ENCODE measurements at regions of chr21 and their contacts with region 1.

Region 1: DNA sequence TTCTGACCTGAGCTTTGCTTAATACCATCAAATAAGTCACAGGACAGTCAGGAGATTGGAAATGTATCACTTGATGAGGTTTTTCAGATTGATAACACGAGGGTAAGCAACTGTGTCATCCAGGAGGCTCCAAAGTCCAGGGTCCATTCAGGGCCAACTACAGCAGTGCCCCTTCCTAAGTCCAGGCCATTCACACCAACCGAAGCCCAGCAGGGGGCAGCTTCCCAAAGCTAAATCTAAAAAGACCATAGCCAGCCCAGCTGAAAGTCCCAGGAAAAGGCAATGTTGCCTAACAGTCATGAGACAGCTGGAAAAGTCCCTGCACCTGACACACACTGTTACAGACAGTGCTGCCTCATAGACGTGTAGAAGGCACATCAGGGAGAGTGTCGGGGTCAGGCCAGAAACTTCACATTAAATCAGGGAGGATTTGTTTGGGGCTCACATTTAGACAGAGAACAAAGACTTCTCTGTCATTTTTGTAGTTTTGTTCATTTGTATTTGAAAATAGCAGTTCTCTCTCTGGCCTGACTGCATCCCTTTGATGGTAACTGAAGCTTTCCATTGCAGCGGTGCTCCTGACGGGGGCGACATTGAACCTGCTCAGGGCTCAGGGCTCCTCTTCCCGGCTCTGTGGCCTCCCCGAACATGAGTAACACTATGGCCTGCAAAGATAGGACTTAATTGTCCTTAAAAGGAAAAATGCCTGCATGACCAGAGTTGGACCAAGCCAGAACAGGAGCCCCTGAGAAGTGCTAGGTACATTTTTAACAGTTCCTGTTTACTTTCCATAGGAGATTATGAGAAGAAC is 200.4 kb downstream of the NRIP1 start:
- DNase-seq: peak; percentile 94
- ATAC-seq: peak; percentile 95
- H3K4me3 ChIP-seq: peak overlapping the region in 2 of 3 experiments; percentile 48 to 53; a peak in 4 of 6 replicates
- H3K27ac ChIP-seq: peak overlapping the region; percentile 76
- H3K4me1 ChIP-seq: peaks cover 54% of the 10 kb centered on the region
- H3K27me3 ChIP-seq: no peaks in the 10 kb centered on the region
- CTCF ChIP-seq: peak; percentile 76
- EP300 ChIP-seq: peak in 1 of 2 experiments; percentile 69; a peak in 2 of 4 replicates
- POLR2A ChIP-seq: no peak
- RAD21 ChIP-seq: peak; percentile 72; the same call in 1 of the 2 replicates

Region 2: DNA sequence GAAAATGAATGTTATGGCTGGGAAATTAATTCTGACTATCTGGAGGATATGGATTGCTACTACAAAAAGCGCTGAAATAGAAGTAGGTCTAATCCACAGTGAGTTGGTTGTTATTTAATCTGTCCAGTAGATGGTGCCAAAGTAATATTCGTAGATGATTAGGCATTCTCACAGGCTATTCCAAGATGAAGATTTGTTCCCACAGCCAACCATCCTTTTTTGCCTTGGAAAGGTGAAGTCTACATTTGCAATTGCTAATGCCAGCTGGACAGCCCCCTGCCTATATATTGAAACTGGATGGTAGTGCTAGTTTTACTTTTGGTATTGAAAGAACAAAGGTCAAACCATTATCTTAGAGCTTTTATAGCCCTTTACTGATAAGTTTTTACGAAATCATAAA is 604.7 kb before region 1 on chr21:
- CTCF ChIA-PET with region 1: interaction called, 4 read pairs
- POLR2A ChIA-PET with region 1: no interaction called
- in situ Hi-C with region 1: no loop called
- intact Hi-C with region 1: loop called (anchors 2 kb)
- DNase-seq: peak; percentile 39
- ATAC-seq: peak; percentile 82
- H3K4me3 ChIP-seq: no peak overlapping the region
- H3K27ac ChIP-seq: no peak overlapping the region
- H3K4me1 ChIP-seq: no peaks in the 10 kb centered on the region
- H3K27me3 ChIP-seq: no peaks in the 10 kb centered on the region
- CTCF ChIP-seq: peak; percentile 67
- EP300 ChIP-seq: no peak
- POLR2A ChIP-seq: no peak
- RAD21 ChIP-seq: no peak

Region 3: DNA sequence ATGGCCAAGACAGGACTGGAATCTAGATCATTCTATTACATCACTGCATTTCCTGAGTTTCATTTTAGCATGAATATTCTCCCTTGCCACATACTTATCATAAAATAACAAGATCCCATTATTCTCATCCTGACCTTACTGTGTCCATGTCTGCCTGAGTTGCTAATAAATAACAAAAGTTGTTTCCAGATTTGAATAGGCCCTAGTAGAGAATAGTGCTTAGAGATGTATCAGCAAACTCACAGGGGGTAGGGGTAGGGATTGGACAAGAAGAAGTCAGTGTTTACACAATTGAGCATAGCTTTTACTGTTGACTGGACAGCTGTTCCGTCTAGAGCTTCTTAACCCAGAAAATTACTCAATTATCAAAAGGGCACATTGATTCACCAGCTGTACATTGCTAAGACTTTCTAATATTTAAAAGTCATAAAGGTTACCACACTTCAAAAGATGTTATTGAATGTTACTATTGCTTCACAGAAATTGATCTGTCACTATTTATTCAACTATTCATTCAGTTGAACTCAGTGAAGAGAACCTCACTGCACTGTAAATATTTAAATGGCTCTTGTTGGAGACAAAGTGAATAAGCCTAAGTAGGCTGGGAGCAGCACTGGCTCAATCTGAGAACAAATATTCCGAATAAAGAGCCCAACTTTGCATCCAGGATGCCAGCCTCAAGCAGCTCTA is 78.5 kb after region 1 on chr21:
- CTCF ChIA-PET with region 1: interaction called, 7 read pairs
- POLR2A ChIA-PET with region 1: interaction called, 14 read pairs
- in situ Hi-C with region 1: no loop called
- intact Hi-C with region 1: loop called (anchors 1 kb)
- DNase-seq: peak; percentile 91
- ATAC-seq: peak; percentile 96
- H3K4me3 ChIP-seq: no peak overlapping the region; a peak in 1 of 6 replicates
- H3K27ac ChIP-seq: peak overlapping the region; percentile 71
- H3K4me1 ChIP-seq: peaks cover 55% of the 10 kb centered on the region
- H3K27me3 ChIP-seq: no peaks in the 10 kb centered on the region
- CTCF ChIP-seq: no peak
- EP300 ChIP-seq: peak; percentile 62 to 97
- POLR2A ChIP-seq: no peak
- RAD21 ChIP-seq: no peak

Region 4: DNA sequence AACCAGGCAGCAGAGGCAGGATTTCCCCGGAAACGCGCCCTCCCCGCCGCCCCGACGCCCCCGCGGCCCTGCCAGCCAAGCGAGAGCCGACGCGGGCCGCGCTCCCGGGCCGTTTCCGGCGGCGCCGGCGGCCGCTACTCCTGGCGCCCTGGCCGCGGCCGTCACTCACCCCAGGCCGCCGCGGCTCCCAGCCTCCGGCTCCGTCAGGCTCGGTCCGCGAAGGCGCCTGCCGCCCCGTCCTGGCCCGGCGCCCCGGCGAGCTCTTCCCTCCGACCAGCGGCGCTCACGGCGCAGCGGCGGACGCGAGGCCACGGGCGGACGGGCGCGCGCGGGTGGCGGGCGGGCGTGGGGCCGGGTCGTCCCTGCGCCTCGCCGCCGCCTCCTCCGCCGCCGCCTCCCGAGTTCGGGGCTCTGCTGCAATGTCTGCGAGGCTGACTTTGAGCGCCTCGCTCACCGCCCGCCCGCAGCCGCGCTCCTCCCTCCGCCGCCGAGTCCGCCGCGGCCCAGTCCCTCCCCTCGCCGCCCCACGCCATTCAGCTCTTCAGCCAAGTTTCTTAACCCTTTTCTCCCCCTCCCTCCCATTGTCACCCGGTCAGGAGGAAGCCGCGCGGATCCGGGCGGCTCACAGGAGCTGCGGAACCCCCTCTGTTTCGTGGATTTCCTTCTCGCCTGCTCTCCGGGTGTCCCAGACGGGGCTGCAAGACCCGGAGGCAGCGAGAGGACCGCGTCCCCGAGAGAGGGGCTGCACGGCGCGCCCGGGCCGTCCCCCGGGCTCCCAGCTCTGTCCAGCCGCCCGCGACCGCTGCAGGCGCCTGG is 200.4 kb after region 1 on chr21 and contains the start of gene NRIP1:
- CTCF ChIA-PET with region 1: no interaction called
- POLR2A ChIA-PET with region 1: interaction called, 17 read pairs
- in situ Hi-C with region 1: loop called (anchors 10 kb)
- intact Hi-C with region 1: loop called (anchors 1 kb)
- DNase-seq: peak; percentile 78
- ATAC-seq: peak; percentile 92
- H3K4me3 ChIP-seq: peak within 1 kb of the TSS; percentile 83 to 95 (median 92)
- H3K27ac ChIP-seq: peak within 1 kb of the TSS; percentile 95
- H3K4me1 ChIP-seq: peaks cover 45% of the 10 kb centered on the region
- H3K27me3 ChIP-seq: peaks cover 0 to 4% of the 10 kb centered on the region in 2 experiments; a peak in 1 of 5 replicates
- CTCF ChIP-seq: no peak
- EP300 ChIP-seq: 0 out of 4 replicates have a peak, but pooled peaks of 1 of the 2 experiments have one; percentile 11
- POLR2A ChIP-seq: peak; percentile 28 to 75; a peak in 3 of 4 replicates
- RAD21 ChIP-seq: peak; percentile 33
- total RNA-seq, gene NRIP1: 69.0 and 99.0 TPM in 2 replicates

Region 5: DNA sequence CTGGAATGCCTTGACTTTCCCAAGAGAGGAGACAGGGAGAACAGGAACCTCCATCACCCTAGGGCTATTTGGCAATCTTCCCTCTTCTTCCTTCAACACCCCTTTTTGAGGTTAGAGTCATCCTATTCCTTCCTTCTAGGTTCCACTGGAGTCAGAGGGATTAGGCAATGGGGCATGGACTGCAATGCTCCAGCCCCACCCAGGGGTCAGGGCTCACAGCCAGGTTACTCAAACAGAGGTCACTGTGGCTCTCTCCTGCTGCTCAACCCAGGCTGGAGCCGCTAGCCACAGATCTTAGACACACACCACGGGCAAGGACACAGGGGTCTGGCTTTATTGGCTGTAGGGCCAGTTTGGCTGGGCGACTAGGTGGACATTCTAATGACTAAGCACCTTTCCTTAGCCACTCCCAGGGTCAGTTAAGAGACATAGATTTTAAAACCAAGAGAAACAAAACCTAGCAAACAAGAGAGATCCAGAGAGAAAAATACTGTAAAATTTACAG is 345.9 kb after region 1 on chr21:
- CTCF ChIA-PET with region 1: no interaction called
- POLR2A ChIA-PET with region 1: no interaction called
- in situ Hi-C with region 1: no loop called
- intact Hi-C with region 1: loop called (anchors 2 kb)
- DNase-seq: peak; percentile 92
- ATAC-seq: peak; percentile 95
- H3K4me3 ChIP-seq: peak overlapping the region in 2 of 3 experiments; percentile 35 to 46; a peak in 3 of 6 replicates
- H3K27ac ChIP-seq: peak overlapping the region; percentile 91
- H3K4me1 ChIP-seq: peaks cover 78% of the 10 kb centered on the region
- H3K27me3 ChIP-seq: no peaks in the 10 kb centered on the region
- CTCF ChIP-seq: peak; percentile 78
- EP300 ChIP-seq: peak; percentile 54 to 94; a peak in 3 of 4 replicates
- POLR2A ChIP-seq: peak; percentile 34 to 38; a peak in 2 of 4 replicates
- RAD21 ChIP-seq: peak; percentile 56; the same call in 1 of the 2 replicates

Region 6: GRCh38 chr21:15552914-15553494 is 688.6 kb after region 1 on chr21:
- CTCF ChIA-PET with region 1: no interaction called
- POLR2A ChIA-PET with region 1: no interaction called
- in situ Hi-C with region 1: no loop called
- intact Hi-C with region 1: loop called (anchors 1 kb)
- DNase-seq: peak; percentile 35
- ATAC-seq: peak; percentile 63
- H3K4me3 ChIP-seq: no peak overlapping the region
- H3K27ac ChIP-seq: no peak overlapping the region
- H3K4me1 ChIP-seq: no peaks in the 10 kb centered on the region
- H3K27me3 ChIP-seq: no peaks in the 10 kb centered on the region; a peak in 2 of 5 replicates
- CTCF ChIP-seq: peak; percentile 54
- EP300 ChIP-seq: no peak
- POLR2A ChIP-seq: no peak
- RAD21 ChIP-seq: peak; percentile 58

Measured in HepG2 (cell line).